Naive thymus-derived CD4-positive, alpha-beta T cell (primary cell): ENCODE measurements at regions of chr6 and their contacts with region 1.

Region 1: DNA sequence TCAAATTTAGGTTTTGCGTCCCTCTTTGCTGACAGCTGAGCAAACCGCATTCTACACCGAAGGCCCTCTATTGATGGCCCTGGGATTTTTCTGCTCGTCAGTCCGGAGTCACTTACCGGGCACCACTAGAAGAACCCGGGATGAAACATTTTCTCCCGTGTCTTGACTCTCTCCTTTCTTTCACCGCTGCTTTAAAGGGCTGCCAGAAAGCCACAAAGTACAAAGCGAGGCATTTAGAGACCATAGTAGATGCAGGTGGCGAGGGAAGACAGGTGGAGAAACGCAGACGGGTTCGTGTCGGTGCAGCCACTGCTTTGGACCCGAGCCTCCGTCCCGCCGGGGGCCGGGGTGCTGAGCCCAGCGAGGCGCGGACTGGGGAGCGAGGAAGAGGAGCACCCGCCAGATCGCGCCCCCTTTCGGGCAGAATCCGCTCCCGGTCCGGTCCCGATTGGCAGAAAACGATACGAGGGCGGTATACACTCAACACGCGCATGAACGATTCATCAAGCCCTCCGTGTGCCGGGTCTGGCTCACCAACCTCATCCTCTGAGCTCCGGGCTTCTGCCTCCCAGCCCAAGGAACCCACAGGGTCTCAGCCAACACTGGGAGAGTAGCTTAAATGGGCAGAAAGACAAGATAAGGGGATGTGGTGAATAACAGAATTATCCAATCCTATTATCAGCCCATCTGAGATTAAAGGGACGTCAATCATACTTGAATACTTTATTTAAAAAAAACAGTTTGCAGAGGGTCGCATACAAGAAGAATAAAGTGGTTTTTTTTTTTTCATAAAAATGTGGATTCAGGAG is 84.9 kb downstream of the TRIM27 start:
- DNase-seq: peak; percentile 66 to 89 (median 81)
- ATAC-seq: peak; percentile 79
- H3K4me3 ChIP-seq: peak overlapping the region; percentile 83
- H3K4me3 Mint-ChIP-seq: peak overlapping the region; percentile 86 to 99 (median 96)
- H3K27ac ChIP-seq: peak overlapping the region; percentile 60
- H3K27ac Mint-ChIP-seq: peak overlapping the region; percentile 83 to 98 (median 93)
- H3K4me1 ChIP-seq: peaks cover 8 to 11% of the 10 kb centered on the region in 2 donors
- H3K4me1 Mint-ChIP-seq: peaks cover 13 to 31% (median 20%) of the 10 kb centered on the region in 7 donors
- H3K27me3 ChIP-seq: no peaks in the 10 kb centered on the region
- H3K27me3 Mint-ChIP-seq: peaks cover 17 to 66% (median 25%) of the 10 kb centered on the region in 5 donors

Region 2: DNA sequence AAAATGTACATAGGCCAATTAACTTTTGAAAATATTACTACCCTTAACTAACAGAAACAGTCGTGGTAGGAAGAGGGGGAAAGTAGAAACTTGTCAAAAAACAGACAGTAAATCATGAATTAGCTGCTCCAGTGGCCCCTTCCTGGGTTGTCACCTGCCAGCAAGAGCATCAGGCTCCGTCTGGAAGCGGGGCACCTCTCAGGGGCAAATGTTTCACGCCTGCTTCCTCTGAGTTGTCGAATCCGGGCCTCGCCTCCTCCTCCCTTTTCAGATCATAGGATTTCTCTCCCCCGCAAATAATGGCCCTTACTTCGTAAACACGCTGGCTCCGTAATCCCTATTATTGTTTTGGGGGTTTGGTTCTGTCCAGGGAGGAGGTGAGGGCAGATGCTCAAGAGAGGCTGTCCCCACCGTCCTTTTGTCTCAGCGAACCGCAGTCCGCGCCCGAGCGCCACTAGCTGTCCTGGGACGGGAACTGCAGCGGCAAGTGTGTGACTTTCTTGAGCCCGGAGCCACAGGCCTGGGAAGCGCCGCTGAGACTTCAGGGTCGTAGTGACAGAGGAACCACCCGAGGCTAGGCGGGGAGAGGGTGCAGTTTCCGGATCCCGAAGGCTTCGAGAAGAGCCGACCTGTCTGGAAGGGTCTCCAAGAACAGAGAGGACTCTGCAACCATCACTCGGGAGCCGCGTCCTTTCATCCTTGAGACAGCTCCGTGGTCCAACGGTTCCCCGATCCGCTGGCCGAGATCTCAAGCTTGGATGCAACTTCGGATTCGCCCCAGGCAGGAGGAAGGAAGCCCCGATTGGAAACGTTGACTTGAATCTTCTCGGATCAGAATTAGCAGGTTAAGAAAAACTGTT is 1151.5 kb before region 1 on chr6:
- CTCF ChIA-PET with region 1: no interaction called
- POLR2A ChIA-PET with region 1: no interaction called
- intact Hi-C with region 1: loop called in 1 of 2 experiments (anchors 2 kb)
- DNase-seq: peak; percentile 57 to 79 (median 65)
- ATAC-seq: peak; percentile 81
- H3K4me3 ChIP-seq: peak overlapping the region; percentile 88
- H3K4me3 Mint-ChIP-seq: peak overlapping the region; percentile 87 to 96 (median 94)
- H3K27ac ChIP-seq: peak overlapping the region; percentile 61
- H3K27ac Mint-ChIP-seq: peak overlapping the region; percentile 86 to 100 (median 97)
- H3K4me1 ChIP-seq: peaks cover 4 to 6% of the 10 kb centered on the region in 2 donors
- H3K4me1 Mint-ChIP-seq: peaks cover 7 to 40% (median 27%) of the 10 kb centered on the region in 7 donors
- H3K27me3 ChIP-seq: no peaks in the 10 kb centered on the region
- H3K27me3 Mint-ChIP-seq: peaks cover 5 to 34% (median 5%) of the 10 kb centered on the region in 5 donors

Region 3: GRCh38 chr6:28188111-28188979 is 650.5 kb before region 1 on chr6:
- CTCF ChIA-PET with region 1: no interaction called
- POLR2A ChIA-PET with region 1: no interaction called
- intact Hi-C with region 1: no loop called
- DNase-seq: no peak
- ATAC-seq: no peak
- H3K4me3 ChIP-seq: no peak overlapping the region
- H3K4me3 Mint-ChIP-seq: no peak overlapping the region
- H3K27ac ChIP-seq: no peak overlapping the region
- H3K27ac Mint-ChIP-seq: no peak overlapping the region
- H3K4me1 ChIP-seq: no peaks in the 10 kb centered on the region
- H3K4me1 Mint-ChIP-seq: peaks cover 0 to 1% (median 0%) of the 10 kb centered on the region in 7 donors
- H3K27me3 ChIP-seq: no peaks in the 10 kb centered on the region
- H3K27me3 Mint-ChIP-seq: peaks cover 0 to 32% (median 6%) of the 10 kb centered on the region in 5 donors

Region 4: DNA sequence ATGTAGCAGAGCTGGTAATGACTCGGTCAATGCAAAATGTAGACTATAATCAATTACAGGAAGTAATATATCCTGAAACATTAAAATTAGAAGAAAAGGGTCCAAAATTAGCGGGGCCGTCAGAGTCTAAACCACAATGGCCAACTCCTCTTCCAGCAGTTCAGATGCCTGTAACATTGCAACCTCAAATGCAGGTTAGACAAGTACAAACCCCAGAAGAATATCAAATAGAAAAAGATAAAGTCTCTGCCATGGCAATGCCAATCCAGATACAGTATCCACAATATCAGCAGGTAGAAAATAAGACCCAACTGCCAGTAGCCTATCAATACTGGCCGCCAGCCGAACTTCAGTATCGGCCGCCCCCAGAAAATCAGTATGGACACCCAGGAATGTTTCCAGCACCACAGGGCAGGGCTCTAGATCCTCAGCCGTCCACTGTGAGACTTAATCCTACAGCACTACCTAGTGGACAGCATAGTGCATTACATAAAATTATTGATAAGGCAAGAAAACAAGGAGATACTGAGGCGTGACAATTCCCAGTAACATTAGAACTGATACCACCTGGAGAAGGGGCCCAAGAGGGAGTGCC is 154.8 kb before region 1 on chr6:
- CTCF ChIA-PET with region 1: interaction called, 4 read pairs
- POLR2A ChIA-PET with region 1: no interaction called
- intact Hi-C with region 1: loop called in 1 of 2 experiments (anchors 1 kb)
- DNase-seq: peak in 7 of 9 donors; percentile 17 to 50 (median 40)
- ATAC-seq: peak; percentile 80
- H3K4me3 ChIP-seq: no peak overlapping the region
- H3K4me3 Mint-ChIP-seq: no peak overlapping the region
- H3K27ac ChIP-seq: no peak overlapping the region
- H3K27ac Mint-ChIP-seq: no peak overlapping the region
- H3K4me1 ChIP-seq: no peaks in the 10 kb centered on the region
- H3K4me1 Mint-ChIP-seq: peaks cover 0 to 17% (median 0%) of the 10 kb centered on the region in 7 donors
- H3K27me3 ChIP-seq: no peaks in the 10 kb centered on the region
- H3K27me3 Mint-ChIP-seq: peaks cover 66 to 89% (median 80%) of the 10 kb centered on the region in 5 donors

Region 5: DNA sequence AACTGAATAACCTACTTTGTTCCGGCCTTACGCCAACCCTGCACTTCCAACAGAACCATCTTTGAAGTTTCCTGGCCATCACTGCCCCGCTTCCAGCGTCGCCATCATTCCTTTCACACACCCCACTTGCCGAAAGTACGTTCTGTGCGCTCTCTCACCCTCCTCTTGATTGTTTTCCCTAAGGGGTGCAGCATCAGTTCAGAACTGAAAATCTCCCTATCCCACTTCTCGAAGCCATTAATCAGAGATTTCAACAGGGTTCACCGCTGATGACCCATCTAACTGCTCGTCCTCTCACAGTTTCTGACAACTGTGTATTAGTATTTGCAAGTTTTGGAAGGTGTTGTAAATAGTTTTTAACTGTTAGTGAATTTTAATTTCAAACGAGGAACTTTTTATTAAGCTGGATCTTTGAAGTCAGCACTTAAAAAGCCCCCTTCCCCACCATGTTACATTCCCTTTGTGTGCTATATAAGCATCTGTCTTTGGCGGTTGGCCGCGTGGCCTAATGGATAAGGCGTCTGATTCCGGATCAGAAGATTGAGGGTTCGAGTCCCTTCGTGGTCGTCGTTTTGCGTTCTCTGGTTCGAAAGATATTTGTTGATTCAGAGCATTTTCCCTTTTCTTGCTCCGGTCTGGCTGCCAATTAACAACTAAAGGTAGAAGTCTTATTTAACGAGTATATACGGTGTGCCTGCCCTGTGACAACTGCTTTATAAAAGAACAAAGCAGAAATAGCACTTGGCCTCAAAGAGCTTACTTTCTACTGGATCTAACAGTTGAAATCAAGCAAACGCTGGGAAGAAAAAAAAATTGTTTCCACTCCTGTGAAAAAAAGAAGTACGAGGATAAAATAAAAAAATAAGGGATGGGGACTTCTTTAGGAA is 42.3 kb after region 1 on chr6:
- CTCF ChIA-PET with region 1: interaction called, 18 read pairs
- POLR2A ChIA-PET with region 1: interaction called, 8 read pairs
- intact Hi-C with region 1: loop called (anchors 1 to 5 kb)
- DNase-seq: peak in 8 of 9 donors; percentile 39 to 73 (median 57)
- ATAC-seq: no peak
- H3K4me3 ChIP-seq: peak overlapping the region; percentile 57
- H3K4me3 Mint-ChIP-seq: peak overlapping the region; percentile 12 to 92 (median 89)
- H3K27ac ChIP-seq: peak overlapping the region; percentile 12
- H3K27ac Mint-ChIP-seq: peak overlapping the region; percentile 14 to 98 (median 91)
- H3K4me1 ChIP-seq: peaks cover 8 to 26% of the 10 kb centered on the region in 2 donors
- H3K4me1 Mint-ChIP-seq: peaks cover 19 to 55% (median 45%) of the 10 kb centered on the region in 7 donors
- H3K27me3 ChIP-seq: no peaks in the 10 kb centered on the region
- H3K27me3 Mint-ChIP-seq: peaks cover 0 to 39% (median 3%) of the 10 kb centered on the region in 5 donors

Region 6: DNA sequence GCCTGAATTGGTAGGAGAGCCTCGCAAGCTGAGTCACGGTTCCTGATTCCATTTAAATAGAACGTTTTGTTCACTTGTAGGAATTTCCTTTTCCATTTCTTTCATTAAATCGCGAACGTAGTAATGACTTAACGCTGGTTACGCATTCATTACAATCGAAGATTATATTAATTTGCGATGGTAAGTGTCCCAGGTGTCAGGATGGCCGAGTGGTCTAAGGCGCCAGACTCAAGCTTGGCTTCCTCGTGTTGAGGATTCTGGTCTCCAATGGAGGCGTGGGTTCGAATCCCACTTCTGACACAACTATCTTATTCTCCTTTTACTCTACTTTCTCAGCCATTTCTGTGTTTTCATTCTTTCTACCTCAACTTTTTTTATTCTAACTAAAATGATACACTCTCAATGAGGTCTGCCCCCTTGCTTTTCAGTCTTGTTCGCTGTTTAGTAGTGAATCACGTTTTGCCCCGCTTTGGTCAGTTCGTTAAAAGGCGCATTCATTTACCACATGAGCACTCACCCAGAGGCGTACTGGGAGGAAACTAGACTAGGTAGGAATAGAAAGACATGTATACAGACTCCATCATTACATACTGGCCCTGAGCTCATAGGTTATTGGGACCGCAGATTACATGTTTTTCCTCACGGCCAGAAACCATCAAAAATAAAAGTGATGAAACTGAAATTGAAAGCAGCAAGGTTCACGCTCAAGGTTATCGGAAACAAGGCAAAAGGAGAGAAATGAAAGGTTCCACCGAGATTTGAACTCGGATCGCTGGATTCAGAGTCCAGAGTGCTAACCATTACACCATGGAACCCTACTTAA is 102.2 kb after region 1 on chr6:
- CTCF ChIA-PET with region 1: interaction called, 16 read pairs
- POLR2A ChIA-PET with region 1: interaction called, 26 read pairs
- intact Hi-C with region 1: loop called (anchors 1 kb)
- DNase-seq: peak; percentile 35 to 90 (median 83)
- ATAC-seq: peak; percentile 76
- H3K4me3 ChIP-seq: peak overlapping the region; percentile 82
- H3K4me3 Mint-ChIP-seq: peak overlapping the region; percentile 86 to 99 (median 92)
- H3K27ac ChIP-seq: peak overlapping the region; percentile 60
- H3K27ac Mint-ChIP-seq: peak overlapping the region; percentile 90 to 99 (median 94)
- H3K4me1 ChIP-seq: peaks cover 22 to 30% of the 10 kb centered on the region in 2 donors
- H3K4me1 Mint-ChIP-seq: peaks cover 34 to 64% (median 56%) of the 10 kb centered on the region in 7 donors
- H3K27me3 ChIP-seq: no peaks in the 10 kb centered on the region
- H3K27me3 Mint-ChIP-seq: peaks cover 0 to 6% (median 0%) of the 10 kb centered on the region in 5 donors

Region 7: DNA sequence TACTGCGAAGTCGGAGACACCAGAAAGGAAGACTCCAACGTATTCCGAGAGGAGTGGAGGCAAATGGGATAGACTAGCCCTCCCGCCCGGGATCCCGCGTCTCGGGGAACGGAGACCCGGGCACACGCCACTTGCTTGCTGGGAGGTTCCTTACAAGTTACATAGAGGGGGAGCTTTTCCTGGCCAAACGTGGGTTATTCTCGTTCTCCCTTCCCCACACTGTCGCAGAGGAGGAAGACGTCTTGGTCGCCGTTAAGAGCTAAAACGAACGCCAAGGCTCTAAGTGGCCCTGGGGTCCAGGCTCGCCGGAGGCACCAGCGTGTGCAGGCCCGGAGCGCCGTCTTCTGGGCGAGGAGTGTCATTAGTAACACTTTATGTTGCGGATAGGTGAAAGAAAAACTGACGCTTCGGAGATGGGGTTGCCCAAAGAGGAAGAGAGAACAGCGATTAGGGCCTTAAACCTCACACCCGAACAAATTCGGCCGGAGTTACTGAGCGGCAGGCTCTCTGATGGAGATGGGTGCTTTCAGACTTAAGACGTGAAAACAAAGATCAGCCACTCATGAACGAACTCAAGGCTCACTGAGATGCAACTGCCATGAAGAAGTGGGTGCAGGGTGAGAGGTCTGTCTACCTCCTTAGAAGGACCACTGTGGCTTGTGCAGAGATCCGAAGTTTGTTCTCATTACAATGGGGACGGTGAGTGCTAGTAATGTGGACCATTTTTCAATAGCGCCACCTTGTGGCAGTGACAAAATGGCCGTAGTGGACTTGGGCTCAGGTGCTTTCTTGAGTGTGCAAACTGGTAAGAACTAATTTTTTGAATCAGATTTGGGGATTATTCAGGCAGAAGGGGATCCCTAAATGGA is 178.0 kb after region 1 on chr6:
- CTCF ChIA-PET with region 1: interaction called, 108 read pairs
- POLR2A ChIA-PET with region 1: interaction called, 24 read pairs
- intact Hi-C with region 1: loop called (anchors 1 kb)
- DNase-seq: peak; percentile 58 to 81 (median 76)
- ATAC-seq: peak; percentile 88
- H3K4me3 ChIP-seq: peak overlapping the region; percentile 87
- H3K4me3 Mint-ChIP-seq: peak overlapping the region; percentile 83 to 94 (median 92)
- H3K27ac ChIP-seq: peak overlapping the region; percentile 40
- H3K27ac Mint-ChIP-seq: peak overlapping the region; percentile 44 to 87 (median 82)
- H3K4me1 ChIP-seq: peaks cover 3 to 5% of the 10 kb centered on the region in 2 donors
- H3K4me1 Mint-ChIP-seq: peaks cover 13 to 22% (median 19%) of the 10 kb centered on the region in 7 donors
- H3K27me3 ChIP-seq: no peaks in the 10 kb centered on the region
- H3K27me3 Mint-ChIP-seq: peaks cover 4 to 33% (median 17%) of the 10 kb centered on the region in 5 donors